Upper lobe of right lung (tissue), 1 donor: ENCODE measurements at regions of chr1 and their contacts with region 1.

Region 1: DNA sequence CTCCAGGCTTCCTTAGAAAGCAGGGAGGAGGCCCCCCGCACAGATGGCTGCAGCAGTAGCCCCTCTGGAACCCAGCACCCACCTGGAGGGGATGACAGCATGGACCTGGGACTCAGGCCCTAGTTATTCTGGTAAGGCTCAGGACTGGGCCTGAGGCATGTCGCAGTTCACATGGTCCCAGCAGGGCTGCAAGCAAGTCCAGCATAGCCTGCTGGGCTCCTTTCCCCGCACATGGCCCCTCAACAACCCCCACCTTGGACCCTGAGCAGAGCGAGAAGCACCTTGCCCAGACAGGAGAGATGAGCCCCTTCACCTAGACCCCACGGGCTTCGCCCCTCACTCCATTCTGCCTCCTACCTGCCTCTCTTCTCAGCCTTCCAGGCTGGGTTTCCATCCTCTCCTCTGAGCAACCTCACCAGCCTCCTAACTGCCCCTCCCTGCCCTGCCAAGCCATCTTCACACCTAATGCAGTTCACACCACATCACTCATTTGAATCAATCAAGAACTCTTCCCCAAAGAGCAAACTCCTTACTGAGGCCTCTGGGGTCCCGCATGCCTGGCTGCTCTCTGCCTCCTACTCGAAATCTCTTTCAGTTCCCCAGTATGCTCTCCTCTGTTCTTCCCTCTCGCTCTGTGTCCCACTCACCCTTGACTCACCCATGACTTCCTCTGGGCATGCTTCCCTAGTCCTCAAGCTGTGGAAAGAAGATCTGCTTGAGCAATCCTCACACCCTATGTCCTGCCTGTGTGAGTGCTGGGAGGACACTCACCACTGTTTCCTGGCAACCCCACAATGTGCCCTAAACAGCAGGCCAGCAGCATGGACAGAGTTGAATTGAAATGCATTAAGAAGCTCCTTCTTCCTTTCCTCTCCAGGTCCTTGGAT is 9.4 kb upstream of the THEMIS2 start:
- DNase-seq: peak; percentile 72
- ATAC-seq: peak; percentile 89
- H3K4me3 ChIP-seq: no peak overlapping the region
- H3K27ac ChIP-seq: peak overlapping the region; percentile 86
- H3K4me1 ChIP-seq: peaks cover 3% of the 10 kb centered on the region
- H3K27me3 ChIP-seq: no peaks in the 10 kb centered on the region
- CTCF ChIP-seq: no peak

Region 2: DNA sequence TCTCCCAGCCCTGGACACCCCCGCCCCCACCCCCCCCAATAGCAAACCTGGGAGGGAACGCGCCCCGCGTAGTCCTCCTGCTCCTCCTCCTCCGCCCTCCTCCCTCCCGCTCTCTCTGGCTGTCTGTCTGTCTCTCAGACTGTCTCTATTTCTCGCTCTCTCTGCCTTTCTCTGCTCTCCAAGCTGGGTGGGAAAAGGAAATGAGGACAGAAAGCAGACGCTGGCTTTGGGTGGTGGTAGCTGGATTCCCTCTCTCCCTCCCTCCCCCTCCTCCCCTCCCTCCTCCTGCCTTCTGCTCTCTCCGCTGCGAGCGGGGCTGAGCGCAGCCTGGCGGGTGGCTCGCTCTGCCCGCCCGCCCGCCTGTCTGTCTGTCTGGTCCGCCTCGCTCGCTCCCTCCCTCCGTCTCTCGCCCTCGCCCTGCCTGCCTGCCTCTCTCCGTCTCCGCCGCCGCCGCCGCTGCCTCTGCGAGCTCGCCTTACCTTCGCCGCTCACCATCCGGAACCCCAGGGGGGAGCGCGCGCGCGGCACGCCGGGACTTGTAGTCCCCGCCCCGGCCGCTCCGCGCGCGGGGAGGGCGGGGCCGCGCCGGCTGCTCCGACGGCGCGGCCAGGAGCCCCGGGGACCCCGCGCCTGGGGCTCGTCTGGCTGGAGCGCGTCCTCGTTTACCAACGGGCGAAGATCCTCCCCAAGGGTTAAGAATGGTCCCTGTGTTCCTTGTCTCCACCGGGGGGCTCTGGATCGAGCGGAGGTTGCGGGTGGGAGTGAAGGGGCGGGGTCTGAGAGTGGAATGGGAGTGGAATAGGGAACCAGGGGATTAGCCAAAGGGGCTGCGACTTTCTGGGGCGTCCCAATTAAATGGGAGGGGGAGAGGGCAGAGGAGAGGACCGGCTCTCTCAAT is 259.0 kb before region 1 on chr1 and contains the start of gene AHDC1:
- intact Hi-C with region 1: no loop called
- DNase-seq: peak; percentile 96
- ATAC-seq: peak; percentile 84
- H3K4me3 ChIP-seq: peak within 1 kb of the TSS; percentile 82
- H3K27ac ChIP-seq: peak within 1 kb of the TSS; percentile 81
- H3K4me1 ChIP-seq: peaks cover 38% of the 10 kb centered on the region
- H3K27me3 ChIP-seq: no peaks in the 10 kb centered on the region
- CTCF ChIP-seq: no peak
- total RNA-seq, gene AHDC1: 34.2 TPM

Region 3: GRCh38 chr1:27713139-27713725 is 149.7 kb before region 1 on chr1:
- intact Hi-C with region 1: no loop called
- DNase-seq: no peak
- ATAC-seq: no peak
- H3K4me3 ChIP-seq: no peak overlapping the region
- H3K27ac ChIP-seq: no peak overlapping the region
- H3K4me1 ChIP-seq: no peaks in the 10 kb centered on the region
- H3K27me3 ChIP-seq: no peaks in the 10 kb centered on the region
- CTCF ChIP-seq: no peak

Region 4: GRCh38 chr1:27979151-27979858 is 116.4 kb after region 1 on chr1:
- intact Hi-C with region 1: loop called (anchors 10 kb)
- DNase-seq: no peak
- ATAC-seq: peak; percentile 89
- H3K4me3 ChIP-seq: no peak overlapping the region
- H3K27ac ChIP-seq: no peak overlapping the region
- H3K4me1 ChIP-seq: peaks cover 7% of the 10 kb centered on the region
- H3K27me3 ChIP-seq: no peaks in the 10 kb centered on the region
- CTCF ChIP-seq: peak; percentile 54

Region 5: GRCh38 chr1:28021064-28021463 is 158.2 kb after region 1 on chr1:
- intact Hi-C with region 1: no loop called
- DNase-seq: no peak
- ATAC-seq: no peak
- H3K4me3 ChIP-seq: no peak overlapping the region
- H3K27ac ChIP-seq: no peak overlapping the region
- H3K4me1 ChIP-seq: no peaks in the 10 kb centered on the region
- H3K27me3 ChIP-seq: no peaks in the 10 kb centered on the region
- CTCF ChIP-seq: no peak